Activated CD8-positive, alpha-beta T cell treated with anti-CD3 and anti-CD28 coated beads, Interleukin-2, amount 10 ng/mL, durations not matched to agents 7 days and 5 days (primary cell): ENCODE measurements at regions of chr15 and their contacts with region 1.

Region 1: DNA sequence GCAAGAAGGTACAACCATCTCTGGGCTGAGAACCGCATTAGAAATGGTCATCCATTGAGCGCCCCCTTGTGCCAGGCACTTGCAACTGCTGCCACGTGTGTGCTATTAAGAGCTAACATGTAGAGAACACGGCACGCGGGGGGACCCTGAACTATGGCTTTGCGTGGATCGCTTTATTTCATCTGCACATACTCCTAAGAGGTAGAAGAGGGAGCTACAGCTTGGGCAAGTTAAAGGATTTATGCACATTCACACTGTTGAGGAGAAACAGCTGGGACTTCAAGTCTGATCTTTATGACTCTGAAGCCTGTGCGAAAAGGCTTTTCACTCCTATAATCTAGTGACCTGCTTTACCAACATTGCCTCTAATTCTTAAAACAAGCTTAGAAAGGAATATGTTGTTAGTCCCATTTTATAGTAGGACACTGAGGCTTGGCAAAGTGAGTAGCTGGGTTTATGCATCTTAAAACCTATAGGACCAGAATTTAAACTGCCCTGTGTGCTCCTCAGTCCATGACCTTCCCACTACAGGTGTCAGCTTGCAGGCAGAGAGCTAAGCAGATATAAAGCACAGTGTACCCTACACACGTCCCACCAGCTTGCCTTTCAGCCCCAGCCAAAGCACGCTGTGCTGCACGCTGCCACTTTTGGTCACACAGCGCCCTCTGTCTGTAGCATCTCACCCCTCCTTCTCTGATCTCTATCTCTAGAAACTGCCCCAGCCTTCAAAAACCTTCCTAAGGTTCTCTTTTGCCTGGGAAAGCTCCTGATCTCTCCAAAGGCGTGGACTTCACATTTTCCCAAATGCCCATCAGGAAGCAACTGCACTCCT is 57.8 kb downstream of the STARD5 start:
- DNase-seq: peak; percentile 91
- ATAC-seq: peak; percentile 92
- H3K4me3 Mint-ChIP-seq: peak overlapping the region; percentile 49
- H3K27ac Mint-ChIP-seq: peak overlapping the region; percentile 63
- H3K4me1 Mint-ChIP-seq: peaks cover 56% of the 10 kb centered on the region
- H3K27me3 Mint-ChIP-seq: no peaks in the 10 kb centered on the region

Region 2: GRCh38 chr15:80989518-80990478 is 276.4 kb before region 1 on chr15 and contains the start of gene MESD:
- CTCF ChIA-PET with region 1: interaction called, 44 read pairs
- POLR2A ChIA-PET with region 1: no interaction called
- DNase-seq: peak; percentile 98
- ATAC-seq: peak; percentile 99
- H3K4me3 Mint-ChIP-seq: peak within 1 kb of the TSS; percentile 97
- H3K27ac Mint-ChIP-seq: peak within 1 kb of the TSS; percentile 98
- H3K4me1 Mint-ChIP-seq: peaks cover 62% of the 10 kb centered on the region
- H3K27me3 Mint-ChIP-seq: no peaks in the 10 kb centered on the region
- total RNA-seq, gene MESD: 27.0 to 27.4 TPM

Region 3: DNA sequence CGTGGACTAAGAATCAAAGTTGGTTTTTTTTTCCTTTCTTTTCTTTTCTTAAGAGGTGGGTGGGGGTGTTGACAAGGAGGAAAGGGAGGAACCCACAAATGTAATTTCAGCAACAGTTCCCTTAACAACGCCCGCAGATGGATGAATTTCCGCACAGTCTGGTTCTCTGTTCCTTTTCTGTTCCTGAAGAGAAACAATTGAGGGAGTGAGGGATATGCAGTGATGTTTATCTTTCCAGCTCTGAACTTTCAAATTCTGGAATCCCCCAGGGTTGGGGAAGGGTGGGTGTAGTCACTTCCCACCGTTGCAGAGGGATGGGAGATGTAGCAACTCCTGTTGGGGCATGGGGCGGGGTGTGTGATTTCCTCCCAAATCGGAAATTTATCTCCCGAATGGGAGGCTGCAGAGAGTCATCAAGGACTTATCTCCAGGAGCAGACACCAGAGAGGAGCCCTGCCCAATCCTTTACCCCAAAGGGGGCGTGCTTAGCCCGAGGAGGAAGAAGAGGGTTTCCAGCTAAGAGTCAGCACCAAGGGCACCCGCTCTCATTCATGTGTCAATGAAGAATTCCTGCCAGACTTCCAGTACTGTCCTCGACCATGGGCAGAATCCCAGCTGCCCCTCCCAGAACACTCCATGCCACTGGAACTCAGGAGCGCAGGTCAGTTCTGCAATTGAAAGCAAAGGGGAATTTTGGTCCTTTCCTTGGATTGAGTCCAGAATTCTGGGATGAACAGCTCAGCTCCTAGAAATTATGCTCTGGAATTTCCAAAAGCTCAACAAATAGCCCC is 167.1 kb before region 1 on chr15:
- CTCF ChIA-PET with region 1: interaction called, 304 read pairs
- POLR2A ChIA-PET with region 1: no interaction called
- DNase-seq: no peak
- ATAC-seq: no peak
- H3K4me3 Mint-ChIP-seq: no peak overlapping the region
- H3K27ac Mint-ChIP-seq: no peak overlapping the region
- H3K4me1 Mint-ChIP-seq: peaks cover 12% of the 10 kb centered on the region
- H3K27me3 Mint-ChIP-seq: peaks cover 23% of the 10 kb centered on the region

Region 4: GRCh38 chr15:81182756-81183438 is 83.3 kb before region 1 on chr15:
- CTCF ChIA-PET with region 1: interaction called, 10 read pairs
- POLR2A ChIA-PET with region 1: no interaction called
- DNase-seq: no peak
- ATAC-seq: no peak
- H3K4me3 Mint-ChIP-seq: no peak overlapping the region
- H3K27ac Mint-ChIP-seq: no peak overlapping the region
- H3K4me1 Mint-ChIP-seq: peaks cover 20% of the 10 kb centered on the region
- H3K27me3 Mint-ChIP-seq: peaks cover 35% of the 10 kb centered on the region

Region 5: DNA sequence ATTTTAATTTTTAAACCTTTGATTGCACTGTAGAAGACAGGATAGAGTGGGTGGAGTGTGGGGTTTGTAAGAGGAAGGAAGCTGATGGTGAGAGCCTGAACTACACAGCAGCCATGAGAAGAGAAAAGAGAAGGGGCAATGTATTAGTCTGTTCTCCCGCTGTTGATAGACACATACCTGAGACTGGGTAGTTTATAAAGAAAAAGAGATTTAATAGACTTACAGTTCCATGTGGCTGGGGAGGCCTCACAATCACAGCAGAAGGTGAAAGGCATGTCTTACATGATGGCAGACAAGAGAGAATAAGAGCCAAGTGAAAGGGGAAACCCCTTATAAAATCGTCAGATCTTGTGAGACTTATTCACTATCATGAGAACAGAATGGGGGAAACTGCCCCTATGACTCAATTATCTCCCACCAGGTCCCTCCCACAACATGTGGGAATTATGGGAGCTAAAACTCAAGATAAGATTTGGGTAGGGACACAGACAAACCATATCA is 20.5 kb after region 1 on chr15:
- CTCF ChIA-PET with region 1: interaction called, 96 read pairs
- POLR2A ChIA-PET with region 1: no interaction called
- DNase-seq: no peak
- ATAC-seq: peak; percentile 77
- H3K4me3 Mint-ChIP-seq: peak overlapping the region; percentile 63
- H3K27ac Mint-ChIP-seq: peak overlapping the region; percentile 89
- H3K4me1 Mint-ChIP-seq: peaks cover 65% of the 10 kb centered on the region
- H3K27me3 Mint-ChIP-seq: no peaks in the 10 kb centered on the region

Region 6: DNA sequence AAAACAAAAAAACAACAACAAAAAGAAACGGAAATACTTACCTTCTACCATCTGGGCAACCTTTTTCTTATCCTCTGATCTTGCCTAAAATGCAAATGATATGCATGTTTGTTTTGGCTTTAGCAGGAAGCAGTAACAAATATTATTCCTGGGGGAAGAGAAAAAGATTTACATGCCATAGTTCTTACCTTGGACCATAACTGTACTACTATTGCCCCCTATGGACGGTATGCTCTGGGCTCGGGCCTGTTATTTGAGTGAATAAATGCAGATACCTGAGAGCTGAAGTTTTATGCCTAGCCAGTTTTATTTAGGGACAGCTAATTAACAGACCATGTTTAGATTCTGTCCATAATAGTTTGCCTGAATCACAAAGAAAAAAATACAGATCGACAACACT is 70.4 kb after region 1 on chr15:
- CTCF ChIA-PET with region 1: interaction called, 73 read pairs
- POLR2A ChIA-PET with region 1: no interaction called
- DNase-seq: peak; percentile 43
- ATAC-seq: peak; percentile 63
- H3K4me3 Mint-ChIP-seq: no peak overlapping the region
- H3K27ac Mint-ChIP-seq: no peak overlapping the region
- H3K4me1 Mint-ChIP-seq: peaks cover 14% of the 10 kb centered on the region
- H3K27me3 Mint-ChIP-seq: peaks cover 3% of the 10 kb centered on the region

Region 7: DNA sequence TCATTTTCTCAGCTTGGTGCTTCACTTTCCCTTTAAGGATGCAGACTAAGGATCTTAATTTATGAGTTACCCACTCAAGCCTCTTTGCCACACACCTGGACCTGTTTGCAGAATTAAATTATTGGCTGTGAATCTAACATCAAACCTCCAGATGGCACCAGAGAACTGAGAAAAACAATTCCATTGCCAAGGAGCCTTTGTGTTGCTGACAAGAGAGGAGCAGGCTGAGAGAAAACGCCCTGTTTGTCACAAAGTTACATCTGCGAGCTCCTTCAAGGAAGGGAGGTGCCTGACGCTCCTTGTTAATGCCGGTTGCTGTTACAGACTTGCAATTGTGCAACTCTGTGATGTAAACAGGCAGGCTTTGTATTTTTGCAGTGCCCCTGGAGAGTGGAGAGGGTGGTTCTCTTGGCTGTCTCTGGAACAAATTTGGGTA is 144.2 kb after region 1 on chr15:
- CTCF ChIA-PET with region 1: interaction called, 20 read pairs
- POLR2A ChIA-PET with region 1: no interaction called
- DNase-seq: peak; percentile 49
- ATAC-seq: peak; percentile 65
- H3K4me3 Mint-ChIP-seq: no peak overlapping the region
- H3K27ac Mint-ChIP-seq: no peak overlapping the region
- H3K4me1 Mint-ChIP-seq: peaks cover 9% of the 10 kb centered on the region
- H3K27me3 Mint-ChIP-seq: peaks cover 16% of the 10 kb centered on the region